BJ (cell line): ENCODE measurements at regions of chr17 and their contacts with region 1.

Region 1: GRCh38 chr17:68662037-68662432 is 60.9 kb upstream of the FAM20A start:
- DNase-seq: no peak
- H3K4me3 ChIP-seq: no peak overlapping the region
- H3K27me3 ChIP-seq: no peaks in the 10 kb centered on the region
- CTCF ChIP-seq: no peak

Region 2: DNA sequence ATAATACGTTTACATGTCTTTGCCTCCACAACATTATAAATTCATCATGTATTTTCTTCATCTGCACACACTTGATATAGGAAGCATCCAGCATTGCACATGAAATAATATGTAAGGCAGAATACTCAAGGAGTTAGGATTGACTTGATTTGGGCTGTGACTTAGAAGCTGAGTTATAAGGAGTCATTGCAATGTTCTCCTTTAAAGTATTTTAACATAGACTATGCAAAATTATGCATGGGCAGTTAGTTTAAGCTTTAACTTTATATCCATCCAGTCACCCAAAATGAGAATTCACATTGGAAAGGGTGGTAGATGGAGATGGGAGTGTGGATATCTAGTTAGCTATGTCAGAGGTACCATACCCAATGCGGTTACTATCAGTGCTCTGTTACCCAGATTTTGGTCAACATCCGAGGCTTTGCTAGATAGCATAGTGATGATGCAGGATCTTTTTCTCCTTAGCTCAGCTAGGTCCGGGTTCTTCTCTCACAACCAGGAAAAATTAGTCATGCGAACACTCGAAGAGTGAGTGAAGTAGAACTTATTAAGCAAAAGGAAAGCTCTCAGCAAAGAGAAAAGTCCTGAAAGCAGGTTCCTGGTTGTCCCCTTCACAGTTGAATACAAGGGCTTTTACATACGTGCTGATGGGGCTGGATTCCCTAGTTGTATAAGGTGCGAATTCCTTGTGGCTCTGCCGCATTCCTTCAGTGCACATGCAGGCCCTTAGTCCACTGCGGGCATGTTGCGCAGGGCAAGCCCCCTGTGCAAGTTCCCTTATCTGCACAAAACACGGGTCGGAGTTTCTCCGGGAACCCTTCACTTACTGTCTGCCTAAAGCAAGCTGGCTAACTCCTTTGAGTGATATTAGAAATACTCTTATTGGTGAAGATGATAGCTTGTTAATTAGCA is 12.2 kb after region 1 on chr17:
- CTCF ChIA-PET with region 1: interaction called, 11 read pairs
- POLR2A ChIA-PET with region 1: no interaction called
- DNase-seq: no peak
- H3K4me3 ChIP-seq: no peak overlapping the region
- H3K27me3 ChIP-seq: peaks cover 2% of the 10 kb centered on the region; the same call in 1 of the 2 replicates
- CTCF ChIP-seq: no peak

Region 3: DNA sequence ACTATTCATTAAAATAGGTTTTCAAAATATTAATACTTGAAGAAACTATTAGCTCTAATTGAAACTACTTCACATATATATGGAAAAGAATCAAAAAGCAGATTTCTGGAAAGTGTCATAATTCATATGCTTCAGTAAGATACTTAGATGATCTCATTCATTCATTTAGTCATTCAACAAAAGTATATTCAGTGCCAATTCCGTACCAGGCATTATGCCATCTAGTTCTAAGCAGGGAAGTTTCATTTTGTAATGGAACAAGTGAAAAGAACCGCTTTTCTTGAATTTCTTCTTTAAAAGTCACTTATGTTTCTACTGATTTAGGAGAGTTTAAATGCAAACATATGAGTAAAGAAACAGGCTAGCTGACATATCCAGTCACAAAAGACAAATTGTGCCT is 57.4 kb after region 1 on chr17:
- CTCF ChIA-PET with region 1: no interaction called
- POLR2A ChIA-PET with region 1: no interaction called
- DNase-seq: no peak
- H3K4me3 ChIP-seq: no peak overlapping the region
- H3K27me3 ChIP-seq: no peaks in the 10 kb centered on the region
- CTCF ChIP-seq: no peak